ENCODE measurements at regions of chr16 and their contacts with region 1.

Region 1: GRCh38 chr16:11255737-11256660 is at the start of gene SOCS1:
- DNase-seq: peak; percentile 92
- ATAC-seq: peak; percentile 84
- total RNA-seq, gene SOCS1: 6.0 TPM

Region 2: GRCh38 chr16:10743610-10744393 is 512.2 kb before region 1 on chr16 and contains the start of gene NUBP1:
- intact Hi-C with region 1: loop called (anchors 10 kb)
- DNase-seq: peak; percentile 99
- ATAC-seq: peak; percentile 97
- total RNA-seq, gene NUBP1: 50.4 TPM

Region 3: DNA sequence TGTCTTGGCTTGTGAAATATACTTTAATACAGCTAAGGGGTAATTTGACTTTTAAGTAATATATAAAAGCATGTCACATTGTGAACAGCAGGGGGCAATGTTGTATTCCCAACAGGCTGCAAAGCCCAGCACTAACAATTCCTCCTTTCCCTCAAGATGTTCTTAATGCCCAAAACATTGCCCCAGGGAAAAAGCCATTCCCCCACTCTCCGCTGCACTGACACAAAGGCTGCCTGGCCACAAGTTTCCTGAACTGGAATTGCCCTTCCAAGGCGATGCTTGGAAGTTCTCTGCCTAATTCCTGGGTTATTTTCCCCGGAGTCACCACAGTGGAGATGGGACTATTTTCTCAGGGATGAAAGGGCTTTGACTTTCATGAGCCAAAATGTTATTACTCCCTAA is 284.4 kb before region 1 on chr16:
- intact Hi-C with region 1: loop called (anchors 1 kb)
- DNase-seq: no peak
- ATAC-seq: peak; percentile 78

Region 4: GRCh38 chr16:11105038-11105903 is 150.7 kb before region 1 on chr16:
- intact Hi-C with region 1: loop called (anchors 2 kb)
- DNase-seq: no peak
- ATAC-seq: peak; percentile 81

Region 5: GRCh38 chr16:11136602-11137001 is 119.4 kb before region 1 on chr16:
- intact Hi-C with region 1: loop called (anchors 2 kb)
- DNase-seq: no peak
- ATAC-seq: peak; percentile 29

Region 6: GRCh38 chr16:11297492-11298142 is 41.6 kb after region 1 on chr16:
- intact Hi-C with region 1: loop called (anchors 2 kb)
- DNase-seq: peak; percentile 82
- ATAC-seq: peak; percentile 95

Region 7: DNA sequence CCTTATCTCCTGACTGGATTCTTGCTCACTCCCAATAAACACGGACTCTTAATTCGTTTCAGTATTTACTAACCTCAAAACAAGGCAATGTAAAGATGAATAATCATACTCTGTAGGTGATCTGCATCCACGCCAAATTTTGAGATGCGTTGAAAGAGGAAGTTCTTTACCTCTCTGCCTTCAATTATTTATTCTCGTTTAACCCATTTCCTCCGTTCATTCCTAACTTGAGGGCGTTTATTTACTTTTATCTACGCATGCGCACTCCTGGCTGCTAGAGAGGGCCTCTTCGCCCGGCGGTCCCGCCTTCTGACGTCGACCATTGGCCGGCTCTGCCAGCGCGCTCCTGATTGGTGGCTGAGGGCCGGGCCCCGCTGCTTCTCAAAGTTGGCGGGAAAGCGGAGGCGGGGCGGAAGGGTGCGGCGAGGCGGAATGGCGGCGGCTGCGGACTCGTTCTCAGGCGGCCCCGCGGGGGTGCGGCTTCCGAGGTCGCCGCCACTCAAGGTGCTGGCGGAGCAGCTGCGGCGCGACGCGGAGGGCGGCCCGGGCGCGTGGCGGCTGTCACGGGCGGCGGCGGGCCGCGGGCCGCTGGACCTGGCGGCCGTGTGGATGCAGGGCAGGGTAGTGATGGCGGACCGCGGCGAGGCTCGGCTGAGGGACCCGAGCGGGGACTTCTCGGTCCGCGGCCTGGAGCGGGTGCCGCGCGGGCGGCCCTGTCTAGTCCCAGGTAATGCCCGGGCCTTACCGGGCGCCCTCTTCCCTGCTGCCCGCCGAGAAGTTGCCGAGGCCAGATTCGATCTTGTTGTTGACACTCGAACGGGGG is 89.3 kb after region 1 on chr16 and contains the start of gene RMI2:
- intact Hi-C with region 1: no loop called
- DNase-seq: peak; percentile 97
- ATAC-seq: peak; percentile 97
- total RNA-seq, gene RMI2: 0.76 TPM

Region 8: DNA sequence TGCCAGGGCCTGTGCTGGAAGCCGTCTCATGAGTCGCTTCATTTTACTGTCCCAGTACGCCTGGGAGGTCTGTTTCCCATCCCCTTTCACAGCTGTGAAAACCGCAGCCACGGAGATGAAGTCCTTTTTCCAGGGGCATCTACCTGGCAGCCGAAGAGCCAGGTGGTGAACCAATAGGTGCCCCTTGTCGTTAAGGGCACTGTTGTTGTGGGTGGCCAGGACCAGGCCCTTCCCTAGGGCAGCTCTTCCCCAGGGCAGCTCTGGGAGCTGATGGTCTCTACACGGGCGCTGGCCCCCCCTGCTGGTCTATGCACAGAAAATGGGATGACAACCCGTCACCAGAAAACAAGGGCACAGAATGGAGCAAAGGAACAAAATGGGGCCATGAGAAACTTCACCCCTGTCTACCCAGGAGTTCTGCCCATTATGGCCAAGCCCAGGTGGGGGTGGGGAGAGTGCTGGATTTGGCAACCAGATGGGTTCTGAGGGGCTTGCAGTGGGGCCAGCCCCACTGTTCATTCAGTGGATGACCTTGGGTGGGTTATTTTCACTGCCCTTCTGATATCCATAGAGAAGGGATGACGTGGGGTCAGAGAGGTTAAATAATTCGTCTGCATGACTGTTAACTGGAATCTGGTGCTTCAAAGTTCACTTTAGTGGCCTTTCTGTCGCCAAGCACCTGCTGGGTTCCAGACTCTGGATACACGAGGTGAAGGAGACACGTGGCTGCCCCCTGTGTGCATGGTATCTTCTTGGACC is 100.8 kb after region 1 on chr16:
- intact Hi-C with region 1: loop called (anchors 1 kb)
- DNase-seq: peak; percentile 84
- ATAC-seq: peak; percentile 58